BJ (cell line): ENCODE measurements at regions of chr4 and their contacts with region 1.

Region 1: DNA sequence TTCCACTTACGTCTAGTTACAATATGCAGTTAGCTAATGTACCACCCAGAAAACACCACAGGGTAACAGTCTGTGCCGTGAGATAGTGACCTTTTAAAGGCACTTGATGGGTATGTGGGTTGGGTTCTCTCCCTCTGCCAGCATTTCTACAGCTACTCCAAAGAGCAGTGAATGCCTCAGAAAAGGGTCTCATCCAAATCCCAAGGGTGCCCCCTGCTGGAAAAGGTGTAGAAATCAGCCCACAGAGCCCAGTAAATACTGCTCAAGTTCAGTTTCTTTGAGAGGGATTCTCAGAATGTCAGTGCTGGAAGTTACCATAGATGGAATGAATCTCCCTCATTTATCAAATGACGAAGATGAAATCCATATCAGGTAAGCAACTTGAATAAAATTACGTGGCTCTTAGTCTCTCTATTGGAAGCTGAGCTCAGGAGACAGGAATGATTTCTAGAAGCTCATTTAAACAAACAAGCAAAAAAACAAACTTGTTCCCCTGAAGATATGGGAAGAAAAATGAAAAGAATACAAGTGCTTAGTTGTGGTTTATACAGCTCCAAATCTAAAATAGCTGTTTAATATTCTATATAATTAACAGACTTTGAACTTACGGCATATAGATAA is 9.5 kb downstream of the RNF175 start:
- DNase-seq: peak; percentile 19
- H3K4me3 ChIP-seq: no peak overlapping the region
- H3K27me3 ChIP-seq: peaks cover 2% of the 10 kb centered on the region
- CTCF ChIP-seq: peak; percentile 78

Region 2: DNA sequence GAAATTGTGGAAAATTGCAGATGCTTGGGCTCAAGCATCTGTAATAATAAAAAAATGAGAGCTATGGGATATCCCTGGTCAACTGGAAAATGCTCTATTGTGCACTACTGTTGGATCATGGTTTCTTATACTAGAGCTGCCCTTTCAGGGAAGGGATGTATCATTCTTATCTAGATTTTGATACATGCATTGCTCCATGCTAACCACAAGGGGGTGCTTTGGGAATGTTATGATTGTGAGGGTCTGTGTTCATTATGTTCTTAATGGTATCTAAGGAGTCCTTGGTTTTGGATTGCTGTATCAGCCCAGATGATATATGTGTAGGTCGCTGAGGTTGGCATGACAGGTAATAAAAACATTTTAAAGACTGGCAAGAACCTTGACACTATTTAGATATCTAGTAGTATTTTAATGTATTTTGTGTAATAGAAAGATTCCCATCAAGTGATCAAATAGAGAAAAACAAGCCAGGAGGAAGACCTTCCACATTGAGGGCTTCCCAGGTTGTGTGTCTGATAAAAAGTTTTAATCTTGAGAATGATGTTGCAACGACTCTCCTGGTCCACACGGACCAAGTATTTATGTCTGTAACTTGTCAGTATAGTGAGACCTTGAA is 115.5 kb before region 1 on chr4:
- CTCF ChIA-PET with region 1: interaction called, 30 read pairs
- POLR2A ChIA-PET with region 1: no interaction called
- DNase-seq: no peak
- H3K4me3 ChIP-seq: no peak overlapping the region
- H3K27me3 ChIP-seq: no peaks in the 10 kb centered on the region
- CTCF ChIP-seq: peak; percentile 65

Region 3: DNA sequence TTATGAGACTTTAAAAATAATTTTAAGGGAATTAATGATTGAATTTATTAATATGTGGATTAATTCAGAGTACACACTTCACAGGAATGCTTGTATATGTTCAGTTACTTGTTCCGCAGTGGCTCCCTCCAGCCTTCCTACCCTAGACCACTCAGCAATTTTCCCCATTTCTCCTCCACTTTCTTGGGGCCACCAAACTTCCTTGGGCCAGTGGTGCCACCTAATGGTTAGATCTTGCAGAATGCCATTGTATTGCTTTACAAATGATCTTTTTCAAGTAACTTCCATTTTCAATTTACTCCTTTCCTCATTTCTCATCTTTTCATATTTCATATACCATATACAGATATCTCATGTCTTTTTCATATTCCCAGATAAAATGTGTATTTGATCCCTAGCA is 13.1 kb after region 1 on chr4:
- CTCF ChIA-PET with region 1: interaction called, 13 read pairs
- POLR2A ChIA-PET with region 1: no interaction called
- DNase-seq: no peak
- H3K4me3 ChIP-seq: no peak overlapping the region
- H3K27me3 ChIP-seq: peaks cover 10% of the 10 kb centered on the region
- CTCF ChIP-seq: 0 out of 2 replicates have a peak, but pooled peaks have one; percentile 19

Region 4: GRCh38 chr4:153919667-153920066 is 169.4 kb after region 1 on chr4:
- CTCF ChIA-PET with region 1: no interaction called
- POLR2A ChIA-PET with region 1: no interaction called
- DNase-seq: no peak
- H3K4me3 ChIP-seq: no peak overlapping the region
- H3K27me3 ChIP-seq: no peaks in the 10 kb centered on the region
- CTCF ChIP-seq: no peak